ENCODE measurements at regions of chr20 and their contacts with region 1.

Region 1: DNA sequence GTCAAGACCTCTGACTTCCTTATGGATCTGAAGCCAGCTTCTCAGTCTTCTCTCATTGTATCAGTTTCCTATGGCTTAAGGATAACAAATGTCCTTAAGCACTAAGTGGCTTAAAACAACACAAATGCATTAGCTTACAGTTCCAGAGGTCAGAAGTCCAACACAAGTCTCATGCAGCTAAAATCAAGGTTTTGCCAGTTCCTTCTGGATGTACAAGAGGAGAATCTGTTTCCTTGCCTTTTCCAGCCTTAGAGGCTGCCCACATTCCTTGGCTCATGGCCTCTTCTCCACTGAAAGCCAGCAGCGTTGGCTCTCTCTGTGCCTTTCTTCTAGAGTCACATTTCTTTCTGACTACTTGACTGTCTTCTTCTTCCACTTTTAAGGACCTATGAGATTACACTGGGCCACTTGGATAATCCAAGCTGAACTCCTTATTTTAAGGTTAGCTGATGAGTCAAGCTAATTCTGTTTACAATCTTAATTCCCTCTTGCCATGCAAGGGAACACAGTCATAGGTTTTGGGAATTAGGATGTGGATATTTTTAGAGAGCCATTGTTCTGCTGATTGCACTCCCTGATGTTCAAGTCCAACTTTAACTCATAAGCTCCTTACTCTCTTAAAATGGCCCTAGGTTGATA is 179.0 kb downstream of the BCAS1 start:
- DNase-seq: no peak
- H3K4me3 Mint-ChIP-seq: no peak overlapping the region
- H3K27ac Mint-ChIP-seq: no peak overlapping the region
- H3K4me1 Mint-ChIP-seq: peaks cover 45% of the 10 kb centered on the region
- H3K27me3 Mint-ChIP-seq: no peaks in the 10 kb centered on the region

Region 2: GRCh38 chr20:53643031-53643832 is 248.2 kb before region 1 on chr20:
- intact Hi-C with region 1: loop called (anchors 5 kb)
- DNase-seq: peak; percentile 67
- H3K4me3 Mint-ChIP-seq: peak overlapping the region; percentile 76
- H3K27ac Mint-ChIP-seq: peak overlapping the region; percentile 95
- H3K4me1 Mint-ChIP-seq: peaks cover 33% of the 10 kb centered on the region
- H3K27me3 Mint-ChIP-seq: no peaks in the 10 kb centered on the region

Region 3: GRCh38 chr20:53660078-53660909 is 231.1 kb before region 1 on chr20:
- intact Hi-C with region 1: loop called (anchors 2 kb)
- DNase-seq: no peak
- H3K4me3 Mint-ChIP-seq: peak overlapping the region; percentile 77
- H3K27ac Mint-ChIP-seq: peak overlapping the region; percentile 84
- H3K4me1 Mint-ChIP-seq: peaks cover 55% of the 10 kb centered on the region
- H3K27me3 Mint-ChIP-seq: no peaks in the 10 kb centered on the region

Region 4: DNA sequence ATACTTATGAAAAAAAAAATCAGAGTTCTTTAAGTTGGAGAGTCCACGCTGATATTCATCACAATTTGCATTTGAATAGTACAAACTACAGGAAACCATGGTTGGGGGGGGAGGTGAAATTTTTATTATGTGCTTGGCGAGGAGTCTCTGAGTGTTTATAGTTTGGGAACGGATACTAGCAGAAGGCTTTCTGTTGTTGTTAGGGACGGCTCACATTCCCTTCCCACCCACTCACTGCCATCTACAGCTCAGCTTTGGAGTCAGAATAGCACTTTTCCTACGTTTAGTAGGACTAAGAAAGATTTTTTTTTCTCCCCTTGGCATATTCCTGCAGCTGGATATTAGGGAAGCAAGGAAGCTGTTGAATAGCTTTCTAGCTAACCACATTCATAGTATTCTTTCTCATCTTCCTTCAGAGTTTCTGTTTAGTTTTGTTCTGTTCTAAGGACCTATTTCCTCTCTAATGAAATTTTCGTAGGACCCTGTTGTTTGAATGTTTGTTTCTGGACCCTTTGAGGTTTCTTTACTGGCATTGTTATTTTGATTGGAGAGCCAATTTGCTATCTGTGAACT is 62.7 kb before region 1 on chr20:
- intact Hi-C with region 1: loop called (anchors 2 kb)
- DNase-seq: no peak
- H3K4me3 Mint-ChIP-seq: peak overlapping the region; percentile 80
- H3K27ac Mint-ChIP-seq: peak overlapping the region; percentile 95
- H3K4me1 Mint-ChIP-seq: peaks cover 47% of the 10 kb centered on the region
- H3K27me3 Mint-ChIP-seq: no peaks in the 10 kb centered on the region

Region 5: DNA sequence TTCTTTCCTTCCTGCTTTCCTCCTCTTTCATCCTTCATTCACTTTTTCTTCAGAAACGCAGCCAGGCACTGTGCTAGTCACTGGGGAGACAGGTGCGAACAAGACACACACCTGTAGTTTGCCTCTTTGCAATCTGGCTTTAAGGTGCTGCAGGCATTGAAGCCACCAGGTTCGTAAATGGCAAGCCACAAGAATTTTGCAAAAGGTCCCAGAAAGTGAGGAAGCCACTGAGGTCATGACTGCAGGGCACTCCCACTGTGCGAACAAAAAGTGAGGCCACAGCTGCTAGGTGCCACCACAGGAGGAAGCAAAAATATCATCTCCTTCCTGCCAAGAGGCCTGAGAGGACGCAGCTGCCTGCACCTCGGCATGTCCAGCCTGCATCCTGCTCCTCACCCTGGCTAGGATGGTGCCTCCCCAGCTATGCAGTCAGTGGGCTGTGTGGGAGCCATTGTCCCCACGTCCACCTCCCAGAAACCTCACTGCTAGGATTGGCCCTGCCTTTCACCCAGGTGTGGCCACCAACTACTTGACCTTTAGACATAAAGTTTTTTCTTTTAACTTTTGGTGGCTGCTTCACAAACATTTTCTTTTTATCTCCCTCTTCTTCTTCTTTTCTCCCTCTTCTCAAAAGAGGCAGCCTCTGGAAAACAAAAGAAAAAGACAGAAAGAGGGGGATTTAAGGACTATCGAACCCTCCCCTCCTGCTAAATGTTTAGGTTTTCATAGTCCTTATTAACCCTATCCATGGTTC is 51.8 kb before region 1 on chr20:
- intact Hi-C with region 1: loop called (anchors 1 kb)
- DNase-seq: peak; percentile 64
- H3K4me3 Mint-ChIP-seq: peak overlapping the region; percentile 73
- H3K27ac Mint-ChIP-seq: peak overlapping the region; percentile 84
- H3K4me1 Mint-ChIP-seq: peaks cover 62% of the 10 kb centered on the region
- H3K27me3 Mint-ChIP-seq: no peaks in the 10 kb centered on the region

Region 6: GRCh38 chr20:53915446-53916172 is 24.2 kb after region 1 on chr20:
- intact Hi-C with region 1: loop called (anchors 1 kb)
- DNase-seq: peak; percentile 89
- H3K4me3 Mint-ChIP-seq: peak overlapping the region; percentile 89
- H3K27ac Mint-ChIP-seq: peak overlapping the region; percentile 92
- H3K4me1 Mint-ChIP-seq: peaks cover 51% of the 10 kb centered on the region
- H3K27me3 Mint-ChIP-seq: no peaks in the 10 kb centered on the region

Region 7: DNA sequence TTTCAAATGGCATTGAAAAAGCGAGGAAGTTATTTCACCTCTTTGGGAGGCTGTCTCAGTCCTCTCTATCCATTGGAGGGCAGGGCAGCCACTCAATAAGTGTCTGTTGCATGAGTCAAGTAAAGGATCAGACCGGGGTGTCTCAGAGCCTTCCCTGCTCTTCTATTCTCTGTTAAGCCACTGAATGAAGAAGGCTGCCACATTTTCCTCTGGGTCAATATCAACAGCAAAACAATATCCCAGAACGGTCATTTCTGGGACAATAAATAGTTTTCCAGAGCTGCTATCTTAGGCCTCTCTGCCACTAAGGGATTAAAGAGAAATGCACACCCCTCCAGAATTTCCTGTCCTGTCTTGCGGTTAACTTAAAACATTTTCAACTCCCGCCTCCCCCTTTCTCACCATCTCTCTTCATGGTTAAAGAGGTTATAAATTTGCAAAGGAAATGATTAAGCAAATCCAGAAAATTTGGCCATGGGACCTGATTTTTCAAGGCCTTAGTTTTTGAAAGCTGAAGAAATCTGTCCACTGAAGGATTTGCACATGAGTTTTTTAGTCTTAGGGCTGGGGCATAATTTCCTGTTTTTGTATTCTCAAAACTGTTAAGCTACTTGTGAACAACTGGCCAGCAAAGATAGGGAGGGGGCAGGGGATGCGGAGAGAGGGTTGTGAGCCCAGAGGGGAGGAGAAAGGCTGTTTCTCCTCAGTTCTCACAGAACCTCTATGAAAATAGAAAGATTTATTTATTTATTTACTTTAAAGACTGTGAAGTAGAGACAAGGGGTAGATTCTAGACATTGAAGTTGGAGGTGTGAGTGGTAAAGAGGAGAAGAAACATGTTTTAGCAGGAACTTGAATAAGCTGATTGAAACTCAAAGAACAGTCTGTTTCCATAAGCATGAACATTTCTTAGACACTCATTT is 43.3 kb after region 1 on chr20:
- intact Hi-C with region 1: loop called (anchors 2 kb)
- DNase-seq: no peak
- H3K4me3 Mint-ChIP-seq: peak overlapping the region; percentile 24
- H3K27ac Mint-ChIP-seq: peak overlapping the region; percentile 83
- H3K4me1 Mint-ChIP-seq: peaks cover 51% of the 10 kb centered on the region
- H3K27me3 Mint-ChIP-seq: no peaks in the 10 kb centered on the region

Measured in activated T-helper 2 cell treated with anti-CD3 and anti-CD28 coated beads, Interferon-gamma antibody, Interleukin-2, Interleukin-4, amounts not matched to agents 10 μg/mL and 5 μg/mL and 100 μg/mL, durations not matched to agents 14 hours and 24 hours and 36 hours (primary cell).